ENCODE measurements at regions of chr3 and their contacts with region 1.

Region 1: GRCh38 chr3:180989291-180990163 is at the start of gene DNAJC19:
- DNase-seq: peak; percentile 97
- H3K4me3 Mint-ChIP-seq: peak within 1 kb of the TSS; percentile 99
- H3K27ac Mint-ChIP-seq: peak within 1 kb of the TSS; percentile 96
- H3K4me1 Mint-ChIP-seq: peaks cover 11% of the 10 kb centered on the region
- H3K27me3 Mint-ChIP-seq: peaks cover 30% of the 10 kb centered on the region
- CTCF ChIP-seq: no peak
- total RNA-seq, gene DNAJC19: 90.0 and 92.9 TPM in 2 replicates

Region 2: DNA sequence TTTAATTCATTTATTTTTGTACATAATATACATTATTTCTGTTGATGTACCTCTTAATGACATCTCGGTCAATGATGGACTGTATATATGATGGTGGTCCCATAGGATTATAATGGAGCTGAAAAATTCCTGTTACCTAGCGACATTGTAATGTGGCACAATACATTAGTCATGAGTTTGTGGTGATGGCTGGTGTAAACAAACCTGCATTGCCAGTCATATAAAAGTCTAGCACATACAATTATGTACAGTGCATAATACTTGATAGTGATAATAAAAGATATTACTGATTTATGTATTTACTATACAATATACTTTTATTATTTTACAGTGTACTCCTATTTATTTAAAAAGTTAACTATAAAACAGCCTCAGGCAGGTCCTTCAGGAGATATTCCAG is 372.5 kb before region 1 on chr3:
- CTCF ChIA-PET with region 1: no interaction called
- intact Hi-C with region 1: loop called (anchors 10 kb)
- DNase-seq: no peak
- H3K4me3 Mint-ChIP-seq: no peak overlapping the region
- H3K27ac Mint-ChIP-seq: no peak overlapping the region
- H3K4me1 Mint-ChIP-seq: no peaks in the 10 kb centered on the region
- H3K27me3 Mint-ChIP-seq: no peaks in the 10 kb centered on the region
- CTCF ChIP-seq: no peak

Region 3: DNA sequence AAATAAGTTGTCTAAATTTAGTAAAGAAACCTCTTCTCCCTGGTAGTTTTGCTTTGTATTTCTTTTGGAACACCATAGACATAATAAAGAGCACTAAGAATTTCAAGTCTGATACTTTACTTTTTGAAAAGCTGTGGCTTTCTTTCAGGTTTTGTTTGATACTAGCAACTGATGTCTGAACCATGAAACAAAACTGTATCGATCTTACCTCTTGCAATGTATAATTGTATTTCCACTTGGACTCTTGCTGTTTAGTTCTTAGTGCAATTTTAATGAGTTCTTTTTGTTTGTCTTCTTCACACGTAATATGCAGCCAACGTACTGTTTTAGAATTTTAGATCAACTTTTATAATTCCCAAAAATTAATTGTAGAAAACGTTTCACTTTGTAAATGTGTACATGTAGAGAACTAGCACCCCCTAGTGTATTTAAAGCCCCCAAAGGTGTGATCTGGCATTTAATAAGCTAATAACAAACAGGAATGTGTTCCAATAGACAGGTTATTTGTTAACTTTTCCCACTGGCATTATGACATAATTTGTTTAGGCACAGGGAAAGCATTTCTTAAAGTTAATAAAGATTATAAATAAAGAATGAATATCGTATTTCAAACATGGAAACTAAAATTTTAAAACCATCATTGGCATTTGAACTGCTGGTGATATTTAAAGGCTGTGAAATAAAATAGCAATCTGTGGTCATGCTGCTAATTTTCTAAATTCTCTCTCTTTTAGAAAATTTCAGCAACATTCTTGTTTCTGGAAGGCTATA is 289.1 kb after region 1 on chr3:
- CTCF ChIA-PET with region 1: no interaction called
- intact Hi-C with region 1: loop called (anchors 10 kb)
- DNase-seq: no peak
- H3K4me3 Mint-ChIP-seq: no peak overlapping the region
- H3K27ac Mint-ChIP-seq: no peak overlapping the region
- H3K4me1 Mint-ChIP-seq: peaks cover 19% of the 10 kb centered on the region
- H3K27me3 Mint-ChIP-seq: no peaks in the 10 kb centered on the region
- CTCF ChIP-seq: no peak